Caco-2 (cell line): ENCODE measurements at regions of chr15 and their contacts with region 1.

Region 1: DNA sequence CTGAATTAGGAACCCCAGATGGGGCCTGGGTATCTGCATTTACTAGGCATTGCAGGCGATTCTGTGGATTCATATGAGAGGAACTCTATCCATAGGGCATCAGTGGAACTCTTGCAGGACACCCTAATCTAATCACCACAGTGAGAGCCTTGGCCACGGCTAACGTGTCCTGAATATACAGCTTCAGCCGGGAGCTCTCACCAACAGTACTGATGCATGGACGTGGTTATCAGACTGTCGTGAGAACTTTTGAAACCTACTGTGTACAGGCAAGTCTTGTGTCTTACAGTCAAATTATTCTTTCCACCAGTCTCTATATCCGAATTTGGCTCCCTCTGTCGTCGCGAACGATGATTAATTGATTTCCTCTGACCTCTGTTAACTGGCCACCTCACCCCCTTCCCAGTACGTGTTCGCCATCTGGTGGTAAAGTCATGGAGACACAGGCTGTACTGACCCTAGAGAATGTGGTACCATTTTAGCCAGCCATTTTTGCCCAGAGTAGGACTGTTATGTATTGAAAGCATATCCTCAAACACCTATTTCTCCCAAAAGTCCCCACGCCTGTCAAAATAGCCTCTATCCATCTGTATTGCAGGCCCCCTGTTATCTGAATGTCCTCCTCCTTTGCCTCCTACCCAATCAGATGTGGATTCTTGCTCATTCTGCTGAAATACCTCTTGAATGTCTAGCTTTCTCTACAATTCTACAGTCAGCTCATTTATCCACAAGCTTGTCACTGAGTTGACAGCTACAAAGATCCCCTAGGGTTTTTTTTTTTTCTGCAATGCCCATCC is 39.7 kb downstream of the GLDN start:
- DNase-seq: peak; percentile 69 to 75
- H3K4me3 ChIP-seq: no peak overlapping the region
- H3K4me3 Mint-ChIP-seq: no peak overlapping the region
- H3K27ac Mint-ChIP-seq: no peak overlapping the region
- H3K4me1 ChIP-seq: no peaks in the 10 kb centered on the region
- H3K4me1 Mint-ChIP-seq: peaks cover 4% of the 10 kb centered on the region
- H3K27me3 ChIP-seq: no peaks in the 10 kb centered on the region
- H3K27me3 Mint-ChIP-seq: peaks cover 6% of the 10 kb centered on the region
- CTCF ChIP-seq: peak; percentile 83 to 94

Region 2: GRCh38 chr15:51162865-51163762 is 218.1 kb before region 1 on chr15:
- CTCF ChIA-PET with region 1: interaction called, 17 read pairs
- POLR2A ChIA-PET with region 1: no interaction called
- intact Hi-C with region 1: loop called (anchors 1 kb)
- DNase-seq: peak; percentile 47 to 71
- H3K4me3 ChIP-seq: no peak overlapping the region
- H3K4me3 Mint-ChIP-seq: no peak overlapping the region
- H3K27ac Mint-ChIP-seq: no peak overlapping the region
- H3K4me1 ChIP-seq: no peaks in the 10 kb centered on the region
- H3K4me1 Mint-ChIP-seq: no peaks in the 10 kb centered on the region
- H3K27me3 ChIP-seq: no peaks in the 10 kb centered on the region
- H3K27me3 Mint-ChIP-seq: no peaks in the 10 kb centered on the region
- CTCF ChIP-seq: peak; percentile 84 to 86

Region 3: DNA sequence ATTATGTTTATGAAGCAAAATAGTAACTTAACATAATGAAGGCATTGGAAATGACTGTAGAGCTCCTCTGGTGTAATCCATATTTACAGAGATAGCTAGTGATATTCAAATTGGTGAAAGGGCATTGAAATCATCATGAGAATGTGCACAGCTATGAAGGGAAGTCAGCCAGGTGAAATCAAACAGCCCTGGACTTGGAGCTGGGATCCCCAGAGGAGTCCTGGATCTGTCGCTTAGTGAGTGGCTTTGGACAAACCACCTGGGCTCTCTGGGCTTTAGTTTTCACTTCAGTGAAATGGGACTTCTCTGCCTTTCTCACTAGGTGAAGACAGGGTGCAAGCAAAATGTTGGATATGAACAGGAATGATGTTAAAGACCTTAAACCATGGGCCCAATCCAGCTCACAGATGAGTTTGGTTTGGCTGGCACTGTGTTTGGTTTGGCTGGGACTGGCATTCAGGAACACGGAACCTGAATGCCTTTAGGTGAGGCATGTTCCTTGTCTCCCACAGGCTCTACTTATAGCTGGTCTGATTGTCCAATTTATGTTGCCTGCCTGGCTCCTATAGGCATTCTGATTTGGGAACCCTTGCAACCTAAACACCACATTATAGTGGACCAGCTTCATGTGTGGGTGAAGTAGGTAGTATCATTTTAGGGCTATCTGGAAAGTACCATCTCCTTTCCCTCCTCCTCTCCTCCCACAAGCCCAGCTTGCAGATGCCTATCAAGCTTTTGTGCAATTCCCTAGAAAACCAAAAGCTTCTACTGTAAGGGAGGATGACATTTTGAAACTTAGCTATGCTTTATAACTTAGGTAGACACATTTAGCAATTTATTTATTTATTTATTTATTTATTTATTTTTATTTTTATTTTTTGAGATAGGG is 175.9 kb before region 1 on chr15:
- CTCF ChIA-PET with region 1: no interaction called
- POLR2A ChIA-PET with region 1: no interaction called
- intact Hi-C with region 1: no loop called
- DNase-seq: no peak
- H3K4me3 ChIP-seq: no peak overlapping the region
- H3K4me3 Mint-ChIP-seq: no peak overlapping the region
- H3K27ac Mint-ChIP-seq: no peak overlapping the region
- H3K4me1 ChIP-seq: no peaks in the 10 kb centered on the region
- H3K4me1 Mint-ChIP-seq: no peaks in the 10 kb centered on the region
- H3K27me3 ChIP-seq: no peaks in the 10 kb centered on the region
- H3K27me3 Mint-ChIP-seq: no peaks in the 10 kb centered on the region
- CTCF ChIP-seq: no peak

Region 4: GRCh38 chr15:51229907-51230330 is 151.3 kb before region 1 on chr15:
- CTCF ChIA-PET with region 1: interaction called, 15 read pairs
- POLR2A ChIA-PET with region 1: no interaction called
- intact Hi-C with region 1: loop called (anchors 1 kb)
- DNase-seq: no peak
- H3K4me3 ChIP-seq: no peak overlapping the region
- H3K4me3 Mint-ChIP-seq: no peak overlapping the region
- H3K27ac Mint-ChIP-seq: no peak overlapping the region
- H3K4me1 ChIP-seq: no peaks in the 10 kb centered on the region
- H3K4me1 Mint-ChIP-seq: no peaks in the 10 kb centered on the region
- H3K27me3 ChIP-seq: no peaks in the 10 kb centered on the region
- H3K27me3 Mint-ChIP-seq: no peaks in the 10 kb centered on the region
- CTCF ChIP-seq: peak; percentile 24 to 30

Region 5: GRCh38 chr15:51281368-51281967 is 99.7 kb before region 1 on chr15:
- CTCF ChIA-PET with region 1: interaction called, 5 read pairs
- POLR2A ChIA-PET with region 1: no interaction called
- intact Hi-C with region 1: loop called (anchors 1 kb)
- DNase-seq: peak in 1 of 2 experiments; percentile 51
- H3K4me3 ChIP-seq: no peak overlapping the region
- H3K4me3 Mint-ChIP-seq: no peak overlapping the region
- H3K27ac Mint-ChIP-seq: no peak overlapping the region
- H3K4me1 ChIP-seq: peaks cover 3% of the 10 kb centered on the region; the same call in 1 of the 2 replicates
- H3K4me1 Mint-ChIP-seq: peaks cover 3% of the 10 kb centered on the region
- H3K27me3 ChIP-seq: no peaks in the 10 kb centered on the region
- H3K27me3 Mint-ChIP-seq: no peaks in the 10 kb centered on the region
- CTCF ChIP-seq: no peak

Region 6: GRCh38 chr15:51286791-51287190 is 94.4 kb before region 1 on chr15:
- CTCF ChIA-PET with region 1: interaction called, 5 read pairs
- POLR2A ChIA-PET with region 1: no interaction called
- intact Hi-C with region 1: loop called (anchors 1 kb)
- DNase-seq: no peak
- H3K4me3 ChIP-seq: no peak overlapping the region
- H3K4me3 Mint-ChIP-seq: no peak overlapping the region
- H3K27ac Mint-ChIP-seq: no peak overlapping the region
- H3K4me1 ChIP-seq: peaks cover 38% of the 10 kb centered on the region
- H3K4me1 Mint-ChIP-seq: peaks cover 16% of the 10 kb centered on the region
- H3K27me3 ChIP-seq: no peaks in the 10 kb centered on the region
- H3K27me3 Mint-ChIP-seq: no peaks in the 10 kb centered on the region
- CTCF ChIP-seq: peak; percentile 28 to 29

Region 7: DNA sequence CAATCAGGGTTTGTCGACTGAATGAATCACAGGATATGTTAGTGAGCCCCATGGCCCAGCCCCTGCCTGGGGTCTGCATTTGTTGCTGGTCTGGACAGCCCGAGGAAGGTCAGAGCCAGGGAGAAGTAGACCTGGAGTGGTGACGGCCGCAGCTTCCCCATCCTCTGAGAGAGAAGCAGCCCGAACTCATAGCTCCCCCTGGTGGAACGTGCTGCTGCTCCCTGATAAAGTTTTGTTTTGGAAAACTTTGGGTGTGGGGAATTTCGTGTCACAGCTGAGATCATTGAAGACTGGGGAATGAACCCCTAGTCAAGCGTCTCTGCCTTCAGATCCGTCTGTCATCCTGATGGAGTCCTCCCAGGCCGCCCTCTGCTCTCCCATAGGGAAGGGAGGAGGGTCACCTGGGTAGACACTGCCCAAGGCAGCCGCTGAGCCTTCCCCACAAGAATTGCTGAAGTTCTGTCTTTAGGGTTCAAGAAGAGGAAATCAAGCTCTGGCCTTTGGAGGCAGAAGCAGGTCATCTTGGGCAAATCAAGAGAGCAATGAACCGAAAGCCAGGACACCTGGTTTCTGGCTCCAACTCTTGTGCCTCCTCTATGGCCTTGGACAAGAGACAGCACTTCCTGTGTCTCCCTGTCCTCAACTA is 20.8 kb after region 1 on chr15:
- CTCF ChIA-PET with region 1: no interaction called
- POLR2A ChIA-PET with region 1: no interaction called
- intact Hi-C with region 1: loop called (anchors 2 kb)
- DNase-seq: peak in 1 of 2 experiments; percentile 46
- H3K4me3 ChIP-seq: no peak overlapping the region
- H3K4me3 Mint-ChIP-seq: no peak overlapping the region
- H3K27ac Mint-ChIP-seq: no peak overlapping the region
- H3K4me1 ChIP-seq: no peaks in the 10 kb centered on the region
- H3K4me1 Mint-ChIP-seq: no peaks in the 10 kb centered on the region
- H3K27me3 ChIP-seq: no peaks in the 10 kb centered on the region
- H3K27me3 Mint-ChIP-seq: peaks cover 5% of the 10 kb centered on the region
- CTCF ChIP-seq: peak; percentile 52 to 56

Region 8: GRCh38 chr15:51460796-51461195 is 79.6 kb after region 1 on chr15:
- CTCF ChIA-PET with region 1: no interaction called
- POLR2A ChIA-PET with region 1: no interaction called
- intact Hi-C with region 1: no loop called
- DNase-seq: no peak
- H3K4me3 ChIP-seq: no peak overlapping the region
- H3K4me3 Mint-ChIP-seq: no peak overlapping the region
- H3K27ac Mint-ChIP-seq: no peak overlapping the region
- H3K4me1 ChIP-seq: no peaks in the 10 kb centered on the region
- H3K4me1 Mint-ChIP-seq: no peaks in the 10 kb centered on the region
- H3K27me3 ChIP-seq: no peaks in the 10 kb centered on the region
- H3K27me3 Mint-ChIP-seq: no peaks in the 10 kb centered on the region
- CTCF ChIP-seq: no peak

Region 9: GRCh38 chr15:51499379-51499976 is 118.3 kb after region 1 on chr15:
- CTCF ChIA-PET with region 1: no interaction called
- POLR2A ChIA-PET with region 1: no interaction called
- intact Hi-C with region 1: loop called (anchors 1 kb)
- DNase-seq: peak in 1 of 2 experiments; percentile 25
- H3K4me3 ChIP-seq: no peak overlapping the region
- H3K4me3 Mint-ChIP-seq: no peak overlapping the region
- H3K27ac Mint-ChIP-seq: no peak overlapping the region
- H3K4me1 ChIP-seq: 0 out of 2 replicates have a peak, but pooled peaks cover 2% of the 10 kb centered on the region
- H3K4me1 Mint-ChIP-seq: no peaks in the 10 kb centered on the region
- H3K27me3 ChIP-seq: no peaks in the 10 kb centered on the region
- H3K27me3 Mint-ChIP-seq: no peaks in the 10 kb centered on the region
- CTCF ChIP-seq: peak; percentile 42 to 58